ENCODE measurements at regions of chr12 and their contacts with region 1.

Region 1: GRCh38 chr12:22334410-22335290 is at the start of gene ST8SIA1:
- DNase-seq: no peak
- ATAC-seq: peak; percentile 38
- H3K4me3 ChIP-seq: peak within 1 kb of the TSS; percentile 49
- H3K27ac ChIP-seq: no peak within 1 kb of the TSS
- H3K4me1 ChIP-seq: peaks cover 2% of the 10 kb centered on the region; the same call in 1 of the 2 replicates
- H3K27me3 ChIP-seq: peaks cover 33% of the 10 kb centered on the region
- CTCF ChIP-seq: no peak
- POLR2A ChIP-seq: no peak
- RAD21 ChIP-seq: no peak
- total RNA-seq, gene ST8SIA1: 0.28 TPM in 1 of 2 replicates, not detected in the other

Region 2: DNA sequence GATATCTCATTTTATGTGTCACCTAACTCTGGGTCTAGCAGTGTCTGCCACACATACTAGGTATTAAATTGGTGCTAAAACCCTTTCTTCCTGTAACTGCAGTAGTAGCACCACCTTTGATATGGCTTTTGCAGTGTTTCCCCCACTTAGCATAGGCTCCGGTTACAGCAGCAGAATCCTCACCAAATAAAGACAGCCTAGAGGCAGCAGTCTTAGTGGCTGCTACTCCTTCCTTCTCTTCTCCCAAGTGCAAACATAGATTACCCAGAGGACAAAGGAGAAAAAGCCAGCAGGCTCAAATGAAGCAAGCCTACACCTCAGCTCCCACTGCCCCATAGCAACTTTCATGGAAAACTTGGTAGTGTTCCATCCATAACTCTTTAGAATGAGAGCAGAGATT is 363.3 kb before region 1 on chr12:
- CTCF ChIA-PET with region 1: no interaction called
- POLR2A ChIA-PET with region 1: no interaction called
- dilution Hi-C with region 1: no loop called
- in situ Hi-C with region 1: no loop called
- intact Hi-C with region 1: no loop called
- DNase-seq: no peak
- ATAC-seq: peak; percentile 66
- H3K4me3 ChIP-seq: no peak overlapping the region
- H3K27ac ChIP-seq: no peak overlapping the region
- H3K4me1 ChIP-seq: no peaks in the 10 kb centered on the region
- H3K27me3 ChIP-seq: no peaks in the 10 kb centered on the region
- CTCF ChIP-seq: no peak
- POLR2A ChIP-seq: no peak
- RAD21 ChIP-seq: no peak

Region 3: DNA sequence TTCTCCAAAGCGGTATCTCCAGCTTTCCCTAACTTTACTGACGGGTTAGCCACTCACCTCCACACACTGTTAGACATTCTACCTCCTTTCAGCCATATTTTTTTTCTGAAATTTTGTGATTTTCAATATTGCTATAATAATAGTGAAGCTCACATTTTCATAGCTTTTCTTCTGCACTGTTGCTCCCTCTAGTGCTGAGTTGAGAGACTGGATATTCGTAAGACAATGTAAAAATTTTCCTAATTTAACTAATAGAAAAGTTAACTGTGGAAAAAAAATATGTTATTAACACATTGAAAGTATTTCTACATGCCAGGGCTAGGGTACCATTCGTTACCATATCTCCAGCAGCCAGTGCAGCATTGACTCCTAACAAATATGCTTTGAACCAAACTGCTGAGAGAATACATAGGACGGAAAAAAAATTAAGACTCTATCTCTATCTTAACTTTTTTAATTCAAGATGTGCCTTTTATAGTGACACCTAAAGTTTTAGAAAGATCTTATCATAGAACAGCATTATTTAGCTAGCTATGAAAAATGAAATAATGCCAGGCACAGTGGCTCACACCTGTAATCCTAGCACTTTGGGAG is 344.7 kb before region 1 on chr12:
- CTCF ChIA-PET with region 1: no interaction called
- POLR2A ChIA-PET with region 1: no interaction called
- dilution Hi-C with region 1: no loop called
- in situ Hi-C with region 1: no loop called
- intact Hi-C with region 1: loop called (anchors 5 kb)
- DNase-seq: peak; percentile 66
- ATAC-seq: peak; percentile 73
- H3K4me3 ChIP-seq: no peak overlapping the region
- H3K27ac ChIP-seq: no peak overlapping the region
- H3K4me1 ChIP-seq: no peaks in the 10 kb centered on the region
- H3K27me3 ChIP-seq: no peaks in the 10 kb centered on the region
- CTCF ChIP-seq: peak; percentile 81
- POLR2A ChIP-seq: no peak
- RAD21 ChIP-seq: peak; percentile 83

Region 4: DNA sequence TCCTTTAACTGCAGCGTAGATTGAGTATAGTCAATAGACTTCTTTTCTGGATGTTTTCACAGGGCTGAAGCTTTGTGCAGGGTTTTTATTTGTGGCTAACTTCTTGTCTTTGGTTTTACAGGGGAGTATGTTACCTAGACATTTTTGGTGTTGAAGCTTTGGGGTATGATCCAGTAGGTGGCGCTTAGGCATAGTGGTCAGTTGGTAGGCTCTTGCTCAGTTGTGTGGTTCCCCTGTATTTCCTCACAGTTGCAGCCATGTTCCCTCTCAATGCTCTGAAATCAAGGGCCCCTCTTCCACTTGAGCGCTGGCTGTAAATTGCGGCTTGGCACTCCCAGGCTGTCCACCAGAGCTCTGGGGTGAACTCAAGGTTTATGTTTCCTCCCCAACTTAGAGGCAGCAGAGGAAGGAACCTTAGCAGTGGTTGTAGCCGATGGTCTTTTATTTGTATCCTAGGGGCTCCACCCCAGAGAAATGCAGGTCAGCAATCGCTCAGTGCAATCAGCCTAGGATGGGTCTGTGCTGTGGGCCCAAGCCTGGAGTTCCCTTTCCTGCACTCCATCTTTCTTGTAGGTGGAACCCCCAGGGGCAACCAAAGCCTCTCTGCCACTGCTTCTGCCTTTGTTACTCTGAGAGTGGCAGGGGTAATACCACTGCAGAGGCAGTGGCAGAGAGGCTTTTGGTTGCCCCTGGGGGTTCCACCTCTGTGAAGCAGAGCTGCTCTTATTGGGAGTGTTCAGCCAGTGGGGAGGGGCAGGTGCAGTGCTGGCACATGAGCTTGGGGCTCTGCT is 233.5 kb before region 1 on chr12:
- CTCF ChIA-PET with region 1: interaction called, 11 read pairs
- POLR2A ChIA-PET with region 1: no interaction called
- dilution Hi-C with region 1: no loop called
- in situ Hi-C with region 1: no loop called
- intact Hi-C with region 1: loop called (anchors 1 kb)
- DNase-seq: peak; percentile 73
- ATAC-seq: peak; percentile 58
- H3K4me3 ChIP-seq: no peak overlapping the region
- H3K27ac ChIP-seq: no peak overlapping the region
- H3K4me1 ChIP-seq: peaks cover 8% of the 10 kb centered on the region
- H3K27me3 ChIP-seq: no peaks in the 10 kb centered on the region; the same call in 1 of the 2 replicates
- CTCF ChIP-seq: peak; percentile 65
- POLR2A ChIP-seq: no peak
- RAD21 ChIP-seq: peak; percentile 68

Region 5: DNA sequence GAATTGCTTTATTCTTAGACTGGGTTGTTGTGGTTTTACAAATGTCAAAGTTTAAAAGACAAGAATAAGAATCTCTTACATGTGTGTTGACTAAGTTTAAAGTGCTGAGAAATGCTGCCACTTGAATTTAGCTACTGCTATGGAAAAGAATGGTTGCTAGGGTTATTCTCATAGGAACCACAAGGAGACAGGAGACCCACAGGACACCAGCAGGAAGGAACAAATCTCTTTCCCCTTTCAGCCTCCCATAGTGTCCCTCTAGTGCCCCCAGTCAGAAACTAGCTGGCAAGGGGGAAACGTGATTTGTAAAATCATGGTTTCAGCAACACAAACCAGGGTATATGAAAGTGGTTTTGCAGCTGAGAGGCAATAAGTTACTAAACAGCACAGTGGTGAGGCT is 102.8 kb before region 1 on chr12:
- CTCF ChIA-PET with region 1: interaction called, 11 read pairs
- POLR2A ChIA-PET with region 1: no interaction called
- dilution Hi-C with region 1: no loop called
- in situ Hi-C with region 1: no loop called
- intact Hi-C with region 1: loop called (anchors 2 kb)
- DNase-seq: no peak
- ATAC-seq: no peak
- H3K4me3 ChIP-seq: no peak overlapping the region
- H3K27ac ChIP-seq: no peak overlapping the region
- H3K4me1 ChIP-seq: peaks cover 15% of the 10 kb centered on the region
- H3K27me3 ChIP-seq: no peaks in the 10 kb centered on the region; the same call in 1 of the 2 replicates
- CTCF ChIP-seq: no peak
- POLR2A ChIP-seq: no peak
- RAD21 ChIP-seq: no peak

Region 6: GRCh38 chr12:22437031-22437780 is 102.6 kb after region 1 on chr12:
- CTCF ChIA-PET with region 1: no interaction called
- POLR2A ChIA-PET with region 1: no interaction called
- dilution Hi-C with region 1: no loop called
- in situ Hi-C with region 1: loop called (anchors 5 kb)
- intact Hi-C with region 1: no loop called
- DNase-seq: no peak
- ATAC-seq: no peak
- H3K4me3 ChIP-seq: no peak overlapping the region
- H3K27ac ChIP-seq: no peak overlapping the region
- H3K4me1 ChIP-seq: no peaks in the 10 kb centered on the region
- H3K27me3 ChIP-seq: no peaks in the 10 kb centered on the region; the same call in 1 of the 2 replicates
- CTCF ChIP-seq: no peak
- POLR2A ChIP-seq: no peak
- RAD21 ChIP-seq: no peak